ENCODE measurements at regions of chr11 and their contacts with region 1.

Region 1: GRCh38 chr11:117426269-117426685 is 98.6 kb downstream of the CEP164 start:
- H3K4me3 ChIP-seq: no peak overlapping the region
- H3K27ac ChIP-seq: no peak overlapping the region
- H3K4me1 ChIP-seq: no peaks in the 10 kb centered on the region
- CTCF ChIP-seq: peak; percentile 82

Region 2: DNA sequence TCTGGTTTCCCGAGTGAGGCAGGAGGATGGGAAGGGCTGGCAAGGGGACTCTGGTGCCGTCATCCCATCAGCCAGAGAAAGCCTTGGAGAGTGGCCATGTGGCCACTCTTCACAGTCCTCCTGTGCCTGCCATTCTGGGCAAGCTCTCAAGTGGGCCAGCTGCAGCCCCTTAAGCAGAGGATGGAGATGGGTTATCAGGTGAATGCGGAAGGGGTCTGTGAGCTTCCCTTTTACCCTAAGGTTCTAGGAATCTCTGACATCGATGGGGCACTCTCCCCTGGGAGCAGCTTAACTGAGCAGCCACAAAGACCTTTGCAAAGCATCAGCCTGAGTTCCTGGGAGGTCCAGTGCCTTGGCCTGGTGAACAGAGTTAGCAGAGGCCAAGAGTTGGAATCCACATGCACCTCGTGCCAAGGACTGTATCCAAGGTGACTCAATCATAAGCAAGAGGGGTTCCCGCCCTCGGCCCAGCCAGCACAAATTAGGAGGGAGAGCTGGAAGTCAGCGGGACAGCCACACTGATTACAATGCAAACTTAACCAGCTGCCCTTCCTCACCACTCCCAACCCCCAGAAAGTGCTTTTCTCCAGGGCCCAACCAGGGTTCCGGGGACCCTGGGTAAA is 847.1 kb before region 1 on chr11:
- CTCF ChIA-PET with region 1: no interaction called
- POLR2A ChIA-PET with region 1: no interaction called
- H3K4me3 ChIP-seq: no peak overlapping the region
- H3K27ac ChIP-seq: no peak overlapping the region
- H3K4me1 ChIP-seq: no peaks in the 10 kb centered on the region
- CTCF ChIP-seq: no peak

Region 3: DNA sequence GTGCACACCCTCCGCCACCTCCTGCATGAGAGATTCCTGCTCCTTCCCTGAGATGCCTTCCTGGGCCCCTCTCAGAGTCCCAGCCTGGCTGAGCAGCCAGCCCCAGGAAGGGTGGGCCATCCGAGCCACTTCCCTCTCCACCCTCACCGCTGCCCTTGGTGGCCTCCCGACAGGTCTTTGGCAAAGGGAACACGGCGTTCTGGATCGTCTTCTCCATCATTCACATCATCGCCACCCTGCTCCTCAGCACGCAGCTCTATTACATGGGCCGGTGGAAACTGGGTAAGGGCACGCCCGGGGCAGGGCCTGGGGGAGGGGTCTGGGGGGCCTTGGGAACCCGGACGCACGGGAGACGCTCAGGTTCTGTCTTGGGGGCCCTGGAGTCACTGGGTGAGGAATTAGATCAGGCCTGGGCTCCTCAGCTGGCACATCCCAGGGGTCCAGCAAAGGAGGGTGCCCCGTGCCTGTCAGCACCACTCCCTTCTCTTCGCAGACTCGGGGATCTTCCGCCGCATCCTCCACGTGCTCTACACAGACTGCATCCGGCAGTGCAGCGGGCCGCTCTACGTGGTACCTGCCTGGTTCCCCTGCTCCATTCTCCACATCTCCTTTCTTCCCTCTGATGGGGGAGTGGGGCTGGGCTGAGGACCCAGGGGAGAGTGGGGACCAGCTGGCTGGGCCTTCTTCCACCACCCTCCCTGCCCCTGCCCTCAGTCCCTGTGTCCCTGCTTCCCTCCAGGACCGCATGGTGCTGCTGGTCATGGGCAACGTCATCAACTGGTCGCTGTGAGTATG is 234.0 kb before region 1 on chr11:
- CTCF ChIA-PET with region 1: no interaction called
- POLR2A ChIA-PET with region 1: no interaction called
- H3K4me3 ChIP-seq: no peak overlapping the region
- H3K27ac ChIP-seq: no peak overlapping the region
- H3K4me1 ChIP-seq: no peaks in the 10 kb centered on the region
- CTCF ChIP-seq: no peak

Region 4: GRCh38 chr11:117443266-117444195 is 17.3 kb after region 1 on chr11:
- CTCF ChIA-PET with region 1: interaction called, 28 read pairs
- POLR2A ChIA-PET with region 1: no interaction called
- H3K4me3 ChIP-seq: no peak overlapping the region
- H3K27ac ChIP-seq: no peak overlapping the region
- H3K4me1 ChIP-seq: no peaks in the 10 kb centered on the region
- CTCF ChIP-seq: no peak

Region 5: DNA sequence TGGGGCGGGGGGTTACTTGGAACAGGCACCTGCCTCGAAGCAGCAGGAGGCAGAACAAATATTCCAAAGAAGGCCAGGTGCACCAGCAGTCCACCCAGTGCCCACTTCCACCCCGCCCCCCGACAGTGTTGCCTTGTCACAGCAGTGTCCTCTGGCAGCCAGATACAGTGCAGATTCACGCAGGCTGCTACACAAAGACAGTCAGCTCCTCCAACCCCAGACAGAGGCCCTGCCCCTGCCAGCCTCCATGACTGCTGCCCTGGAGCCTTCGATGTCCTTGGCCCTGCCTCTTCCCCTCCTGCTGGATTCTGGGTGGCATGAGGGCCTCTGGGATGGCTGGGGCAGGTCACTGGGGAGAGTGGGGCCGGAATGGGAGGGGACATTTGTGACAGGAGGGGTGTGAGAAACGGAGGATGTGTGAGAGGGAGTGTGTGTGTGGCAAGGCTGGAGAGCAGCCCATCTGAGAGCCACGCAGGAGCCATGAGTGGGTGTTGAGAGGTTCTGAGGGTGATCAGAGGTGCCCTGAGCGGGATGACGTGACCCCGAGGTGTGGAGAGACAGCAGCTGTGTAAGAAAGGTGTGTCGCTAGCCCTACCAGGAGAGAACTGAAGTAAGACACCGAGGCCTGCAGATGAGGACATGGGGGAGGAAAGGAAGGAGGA is 75.1 kb after region 1 on chr11:
- CTCF ChIA-PET with region 1: interaction called, 12 read pairs
- POLR2A ChIA-PET with region 1: no interaction called
- H3K4me3 ChIP-seq: no peak overlapping the region
- H3K27ac ChIP-seq: no peak overlapping the region
- H3K4me1 ChIP-seq: no peaks in the 10 kb centered on the region
- CTCF ChIP-seq: no peak

Region 6: GRCh38 chr11:117807482-117808327 is 381.4 kb after region 1 on chr11:
- CTCF ChIA-PET with region 1: interaction called, 89 read pairs
- POLR2A ChIA-PET with region 1: no interaction called
- H3K4me3 ChIP-seq: no peak overlapping the region
- H3K27ac ChIP-seq: no peak overlapping the region
- H3K4me1 ChIP-seq: no peaks in the 10 kb centered on the region
- CTCF ChIP-seq: peak; percentile 48; the same call in 1 of the 2 replicates

Region 7: DNA sequence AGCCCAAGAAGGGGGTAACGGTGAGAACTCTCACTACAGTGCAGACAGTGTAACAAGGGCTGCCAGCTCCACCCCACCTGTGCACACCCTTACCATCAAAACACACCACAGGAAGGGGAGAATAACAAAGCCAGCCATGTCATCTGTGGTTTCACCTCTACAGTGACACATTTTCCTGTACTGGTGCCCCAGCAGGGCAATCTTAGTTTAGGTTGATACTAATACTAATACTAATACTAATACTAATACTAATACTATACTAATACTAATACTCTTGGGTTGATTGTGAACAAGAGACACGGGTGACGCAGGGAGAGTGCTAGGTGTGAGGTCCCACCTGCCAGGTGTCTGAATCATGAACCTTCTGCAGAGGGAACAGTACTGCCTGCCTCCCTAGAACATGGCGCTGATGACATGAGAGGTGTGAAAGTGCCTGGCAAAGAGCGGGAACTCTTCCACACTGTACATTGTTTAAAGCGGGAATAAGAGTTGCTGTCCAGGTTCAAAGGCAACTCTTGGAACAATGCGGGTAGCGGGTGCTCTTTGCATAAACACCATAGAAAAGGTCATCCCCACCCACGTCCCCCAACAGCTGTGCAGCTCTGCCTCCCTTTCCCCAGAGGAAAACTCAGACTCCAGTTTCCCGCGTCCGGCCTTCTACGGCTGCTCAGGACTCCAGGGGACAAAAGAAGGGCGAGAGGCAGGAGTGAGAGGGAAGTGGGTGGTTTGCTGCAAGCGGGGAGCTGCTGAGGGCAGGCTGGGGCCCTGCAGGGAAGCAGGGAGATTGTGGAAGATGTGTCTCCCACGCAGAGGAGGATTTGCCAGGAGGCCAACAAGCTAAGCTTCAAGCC is 625.6 kb after region 1 on chr11:
- CTCF ChIA-PET with region 1: interaction called, 10 read pairs
- POLR2A ChIA-PET with region 1: no interaction called
- H3K4me3 ChIP-seq: no peak overlapping the region
- H3K27ac ChIP-seq: no peak overlapping the region
- H3K4me1 ChIP-seq: no peaks in the 10 kb centered on the region
- CTCF ChIP-seq: no peak